ENCODE measurements at regions of chr1 and their contacts with region 1.

Region 1: GRCh38 chr1:151198255-151199127 is at the start of gene PIP5K1A:
- DNase-seq: peak; percentile 100
- ATAC-seq: peak; percentile 98
- total RNA-seq, gene PIP5K1A: 65.0 TPM

Region 2: DNA sequence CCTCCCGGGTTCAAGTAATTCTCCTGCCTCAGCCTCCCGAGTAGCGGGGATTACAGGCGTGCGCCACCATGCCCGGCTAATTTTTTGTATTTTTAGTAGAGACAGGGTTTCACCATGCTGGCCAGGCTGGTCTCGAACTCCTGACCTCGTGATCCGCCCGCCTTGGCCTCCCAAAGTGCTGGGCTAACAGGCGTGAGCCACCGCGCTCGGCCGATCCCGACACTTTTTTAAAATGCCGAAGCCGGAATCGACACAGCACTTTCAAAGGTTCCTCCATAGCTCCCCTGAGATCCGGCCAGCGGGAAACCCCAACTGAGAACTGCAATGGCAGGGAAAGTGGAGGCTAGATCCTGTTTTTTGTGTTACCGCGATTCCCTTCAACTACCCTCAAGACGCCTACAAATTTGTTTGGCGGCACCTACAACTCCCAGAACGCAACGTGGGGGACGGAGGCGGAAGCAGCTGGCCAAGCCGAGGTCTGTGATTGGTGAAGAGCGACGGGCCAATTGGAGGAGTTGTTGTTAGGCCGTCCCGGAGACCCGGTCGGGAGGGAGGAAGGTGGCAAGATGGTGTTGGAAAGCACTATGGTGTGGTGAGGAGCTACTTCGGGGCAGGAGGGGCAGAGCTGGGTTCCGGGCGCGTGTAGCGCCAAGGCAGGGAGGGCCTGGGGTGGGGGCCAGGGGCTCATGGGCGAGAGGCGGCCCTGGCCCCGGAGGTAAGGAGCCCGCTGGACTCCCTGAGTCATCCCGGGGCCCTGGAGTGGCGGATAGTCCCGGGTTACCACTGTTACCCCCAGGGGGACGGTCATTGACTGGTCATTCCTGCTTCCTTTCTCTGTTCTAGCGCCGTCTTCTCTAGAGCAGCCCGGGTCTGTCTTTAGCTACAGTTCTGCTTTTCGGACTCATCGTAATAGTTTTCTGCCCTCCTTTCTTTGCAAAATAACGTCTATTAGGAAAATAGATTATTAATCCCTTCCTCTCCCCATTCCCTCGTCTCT is 56.0 kb after region 1 on chr1 and contains the start of gene PSMD4:
- intact Hi-C with region 1: loop called (anchors 5 kb)
- DNase-seq: peak; percentile 97
- ATAC-seq: peak; percentile 100
- total RNA-seq, gene PSMD4: 119 TPM